ENCODE measurements at regions of chr3 and their contacts with region 1.

Region 1: GRCh38 chr3:152519376-152519775 is 250.6 kb downstream of the MBNL1 start:
- DNase-seq: no peak
- ATAC-seq: no peak
- H3K4me3 ChIP-seq: no peak overlapping the region
- H3K4me3 Mint-ChIP-seq: no peak overlapping the region
- H3K27ac ChIP-seq: no peak overlapping the region
- H3K27ac Mint-ChIP-seq: no peak overlapping the region
- H3K4me1 ChIP-seq: no peaks in the 10 kb centered on the region
- H3K4me1 Mint-ChIP-seq: no peaks in the 10 kb centered on the region
- H3K27me3 ChIP-seq: no peaks in the 10 kb centered on the region
- H3K27me3 Mint-ChIP-seq: peaks cover 0 to 2% of the 10 kb centered on the region in 2 donors

Region 2: DNA sequence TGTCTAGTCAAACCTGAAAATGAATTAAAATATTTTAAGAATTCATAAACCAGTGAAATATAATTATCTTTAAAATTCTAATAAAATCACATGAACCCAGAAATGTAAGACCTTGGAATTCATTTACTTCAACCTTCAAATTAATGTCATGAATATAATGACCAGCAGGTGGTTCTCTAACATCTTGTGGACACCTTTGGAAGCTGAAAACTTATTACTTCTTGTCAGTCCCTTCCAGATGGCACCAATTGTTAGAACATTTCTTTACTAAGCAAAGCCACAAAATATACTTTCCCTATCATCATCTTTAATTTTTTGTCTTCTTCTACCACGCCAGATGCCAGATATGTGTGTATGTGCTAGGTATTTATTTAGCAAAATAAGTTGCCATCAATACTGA is 10.7 kb before region 1 on chr3:
- CTCF ChIA-PET with region 1: interaction called in 1 of 2 experiments, 10 read pairs
- POLR2A ChIA-PET with region 1: no interaction called
- DNase-seq: no peak
- ATAC-seq: no peak
- H3K4me3 ChIP-seq: no peak overlapping the region
- H3K4me3 Mint-ChIP-seq: no peak overlapping the region
- H3K27ac ChIP-seq: no peak overlapping the region
- H3K27ac Mint-ChIP-seq: no peak overlapping the region
- H3K4me1 ChIP-seq: peaks cover 0 to 3% of the 10 kb centered on the region in 2 experiments
- H3K4me1 Mint-ChIP-seq: no peaks in the 10 kb centered on the region
- H3K27me3 ChIP-seq: no peaks in the 10 kb centered on the region
- H3K27me3 Mint-ChIP-seq: no peaks in the 10 kb centered on the region

Region 3: DNA sequence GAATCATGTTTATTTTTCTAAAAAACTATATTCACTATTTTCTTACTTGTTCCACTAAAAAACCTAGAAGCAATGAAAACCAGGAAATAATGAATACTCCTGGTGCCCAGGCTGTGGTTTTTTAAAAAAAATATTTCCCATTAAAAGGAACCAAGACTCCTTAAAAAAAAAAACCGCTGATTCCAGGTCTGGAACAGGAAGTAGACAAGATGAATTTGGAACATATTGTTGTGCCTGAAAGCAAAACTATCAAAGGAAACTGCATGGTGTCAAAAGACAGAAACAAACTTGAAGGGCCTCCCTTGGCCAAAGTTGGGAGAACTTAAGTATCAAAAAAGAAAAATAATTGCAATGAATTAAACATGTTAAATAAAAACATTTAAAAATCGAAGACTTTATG is 70.3 kb after region 1 on chr3:
- CTCF ChIA-PET with region 1: no interaction called
- POLR2A ChIA-PET with region 1: no interaction called
- DNase-seq: no peak
- ATAC-seq: no peak
- H3K4me3 ChIP-seq: no peak overlapping the region
- H3K4me3 Mint-ChIP-seq: no peak overlapping the region
- H3K27ac ChIP-seq: no peak overlapping the region
- H3K27ac Mint-ChIP-seq: no peak overlapping the region
- H3K4me1 ChIP-seq: no peaks in the 10 kb centered on the region
- H3K4me1 Mint-ChIP-seq: peaks cover 0 to 7% (median 0%) of the 10 kb centered on the region in 3 donors
- H3K27me3 ChIP-seq: no peaks in the 10 kb centered on the region
- H3K27me3 Mint-ChIP-seq: peaks cover 5 to 7% of the 10 kb centered on the region in 2 donors

Measured in T-cell (primary cell).